OCI-LY7 (cell line): ENCODE measurements at regions of chr5 and their contacts with region 1.

Region 1: DNA sequence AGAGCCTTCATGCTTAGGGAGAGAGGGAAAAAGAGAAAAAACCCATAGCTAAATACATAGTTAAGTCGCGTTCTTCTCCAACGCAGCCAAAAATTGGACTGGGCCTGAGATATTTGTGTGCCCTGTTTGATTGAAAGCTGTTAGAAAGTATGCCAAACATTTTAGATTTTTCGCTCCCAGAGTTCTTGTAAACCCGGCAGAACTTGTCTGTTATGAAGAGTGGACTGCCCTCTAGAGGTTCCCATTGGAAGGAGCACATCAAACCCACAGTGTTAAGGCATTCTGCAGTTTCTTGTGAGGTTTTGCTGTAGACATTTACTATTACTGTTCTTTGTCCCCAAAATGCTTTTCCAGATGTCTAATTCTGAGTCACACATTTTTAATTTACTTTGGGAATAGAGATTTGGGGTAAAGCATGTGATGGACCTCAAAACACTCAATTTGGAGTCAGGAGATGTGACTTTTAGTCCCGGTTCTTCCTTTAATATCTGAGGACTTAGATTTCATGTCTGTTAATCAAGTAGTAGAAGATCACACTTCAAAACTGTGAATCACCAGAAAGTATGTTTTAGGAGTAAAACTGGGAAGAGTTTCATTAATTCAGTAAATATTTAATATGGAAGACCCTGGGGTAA is 96.6 kb downstream of the PCSK1 start:
- DNase-seq: peak; percentile 65
- H3K4me3 ChIP-seq: no peak overlapping the region
- H3K27ac ChIP-seq: no peak overlapping the region
- H3K4me1 ChIP-seq: no peaks in the 10 kb centered on the region
- CTCF ChIP-seq: peak; percentile 94

Region 2: DNA sequence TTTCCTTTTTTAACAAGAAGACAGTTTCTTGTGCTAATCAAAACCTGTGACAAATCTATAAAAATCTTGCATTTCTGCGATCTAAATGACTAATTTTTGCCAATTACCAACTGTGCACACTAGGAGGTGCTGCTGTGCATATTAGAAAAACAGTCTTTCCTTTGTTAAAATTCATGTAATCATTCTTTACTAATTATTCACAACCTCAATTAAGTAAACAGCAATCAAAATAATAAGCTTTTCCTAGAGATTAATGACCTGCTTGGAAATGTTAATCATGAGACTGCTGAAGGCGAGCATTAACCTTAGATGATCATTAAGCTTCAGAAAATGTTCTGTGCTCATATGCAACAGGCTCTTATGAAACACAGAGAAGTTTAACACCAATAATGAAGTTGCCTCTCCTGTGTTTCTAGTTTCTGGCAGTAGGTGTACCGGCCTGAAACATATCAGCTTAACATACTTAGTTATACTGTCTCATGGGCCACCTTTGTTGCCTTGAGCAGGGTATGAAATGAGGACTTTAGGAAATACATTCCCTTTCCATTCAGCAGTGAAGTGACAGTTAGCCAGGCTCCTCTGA is 672.2 kb before region 1 on chr5:
- CTCF ChIA-PET with region 1: no interaction called
- POLR2A ChIA-PET with region 1: no interaction called
- intact Hi-C with region 1: loop called (anchors 10 kb)
- DNase-seq: peak; percentile 42
- H3K4me3 ChIP-seq: no peak overlapping the region
- H3K27ac ChIP-seq: no peak overlapping the region
- H3K4me1 ChIP-seq: no peaks in the 10 kb centered on the region
- CTCF ChIP-seq: peak; percentile 98

Region 3: DNA sequence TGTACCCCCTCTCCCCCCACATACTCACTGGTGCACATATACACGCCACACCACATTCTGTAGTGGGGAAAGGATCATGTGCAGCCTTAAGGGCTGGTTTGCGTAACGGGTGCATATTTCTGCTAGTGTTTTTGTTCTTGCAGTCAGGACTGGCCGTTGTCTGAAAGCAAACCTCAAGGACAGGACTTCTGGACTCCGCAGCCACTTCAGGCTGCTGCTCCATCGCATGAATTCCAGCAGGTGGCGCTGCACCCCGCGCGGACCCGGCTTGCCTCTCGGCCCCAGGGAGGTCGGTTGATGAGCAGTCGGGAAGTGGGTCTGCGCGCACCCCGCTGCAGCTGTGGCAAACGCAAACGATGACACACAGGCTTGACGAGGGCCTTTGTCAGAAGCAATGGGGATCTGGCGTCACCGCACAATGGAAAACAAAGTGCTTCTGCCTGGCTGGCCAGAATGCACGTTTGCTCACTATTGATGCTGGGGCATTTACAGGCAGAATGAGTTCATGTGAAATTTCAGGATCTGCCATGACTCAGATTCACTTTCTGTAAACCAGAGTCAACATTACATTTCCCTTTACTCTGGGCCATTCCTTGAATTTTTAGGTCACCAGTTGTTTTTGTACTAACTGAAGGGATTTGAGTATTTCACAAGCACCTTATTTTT is 477.7 kb before region 1 on chr5:
- CTCF ChIA-PET with region 1: no interaction called
- POLR2A ChIA-PET with region 1: no interaction called
- intact Hi-C with region 1: loop called (anchors 1 kb)
- DNase-seq: peak; percentile 83
- H3K4me3 ChIP-seq: no peak overlapping the region
- H3K27ac ChIP-seq: no peak overlapping the region
- H3K4me1 ChIP-seq: peaks cover 15% of the 10 kb centered on the region
- CTCF ChIP-seq: peak; percentile 96

Region 4: DNA sequence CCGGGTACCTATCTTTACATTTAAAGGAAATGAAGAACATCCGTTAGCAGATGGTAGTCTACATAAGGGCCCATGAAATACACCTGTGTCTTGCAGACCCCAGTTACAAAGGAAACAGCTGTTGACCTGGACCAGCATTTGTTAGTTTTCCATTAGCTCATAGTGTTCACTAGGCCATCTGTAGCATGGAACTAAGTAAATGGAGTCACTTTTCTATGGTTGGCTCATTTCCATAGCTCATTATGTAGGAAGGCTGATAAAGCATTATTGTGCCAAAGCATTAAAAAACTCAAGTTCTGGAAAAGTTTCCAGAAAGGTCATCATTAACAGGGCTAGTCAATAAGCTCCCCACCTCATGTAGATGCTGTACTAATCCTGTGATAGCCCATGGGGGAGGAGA is 34.5 kb after region 1 on chr5:
- CTCF ChIA-PET with region 1: no interaction called
- POLR2A ChIA-PET with region 1: no interaction called
- intact Hi-C with region 1: no loop called
- DNase-seq: no peak
- H3K4me3 ChIP-seq: no peak overlapping the region
- H3K27ac ChIP-seq: no peak overlapping the region
- H3K4me1 ChIP-seq: no peaks in the 10 kb centered on the region
- CTCF ChIP-seq: no peak

Region 5: GRCh38 chr5:96384353-96384752 is 47.9 kb after region 1 on chr5:
- CTCF ChIA-PET with region 1: no interaction called
- POLR2A ChIA-PET with region 1: no interaction called
- intact Hi-C with region 1: no loop called
- DNase-seq: no peak
- H3K4me3 ChIP-seq: no peak overlapping the region
- H3K27ac ChIP-seq: no peak overlapping the region
- H3K4me1 ChIP-seq: no peaks in the 10 kb centered on the region
- CTCF ChIP-seq: no peak

Region 6: DNA sequence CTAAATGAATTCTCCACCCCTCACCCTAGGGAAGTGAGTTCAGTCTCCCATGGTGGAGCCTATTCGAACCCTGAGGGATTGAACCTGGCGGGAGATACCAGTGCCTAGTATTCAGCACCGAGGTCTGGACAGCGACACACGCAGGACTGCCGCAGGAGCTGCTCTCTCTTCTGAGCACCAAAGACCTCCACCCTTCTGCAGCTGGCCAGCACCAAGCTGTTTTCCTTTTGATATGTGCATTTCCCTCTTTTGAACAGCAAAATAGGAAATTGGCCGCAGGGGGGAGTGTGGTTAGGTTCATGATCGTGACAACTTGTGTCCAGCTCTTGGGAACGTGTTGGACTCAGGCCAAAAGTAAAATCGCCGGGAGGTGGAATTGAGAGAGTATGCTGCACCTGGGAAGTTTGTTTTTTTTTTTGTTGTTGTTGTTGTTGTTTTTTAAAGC is 97.8 kb after region 1 on chr5:
- CTCF ChIA-PET with region 1: no interaction called
- POLR2A ChIA-PET with region 1: no interaction called
- intact Hi-C with region 1: no loop called
- DNase-seq: peak; percentile 5
- H3K4me3 ChIP-seq: no peak overlapping the region
- H3K27ac ChIP-seq: no peak overlapping the region
- H3K4me1 ChIP-seq: peaks cover 4% of the 10 kb centered on the region
- CTCF ChIP-seq: no peak